ENCODE measurements at regions of chrX and their contacts with region 1.

Region 1: DNA sequence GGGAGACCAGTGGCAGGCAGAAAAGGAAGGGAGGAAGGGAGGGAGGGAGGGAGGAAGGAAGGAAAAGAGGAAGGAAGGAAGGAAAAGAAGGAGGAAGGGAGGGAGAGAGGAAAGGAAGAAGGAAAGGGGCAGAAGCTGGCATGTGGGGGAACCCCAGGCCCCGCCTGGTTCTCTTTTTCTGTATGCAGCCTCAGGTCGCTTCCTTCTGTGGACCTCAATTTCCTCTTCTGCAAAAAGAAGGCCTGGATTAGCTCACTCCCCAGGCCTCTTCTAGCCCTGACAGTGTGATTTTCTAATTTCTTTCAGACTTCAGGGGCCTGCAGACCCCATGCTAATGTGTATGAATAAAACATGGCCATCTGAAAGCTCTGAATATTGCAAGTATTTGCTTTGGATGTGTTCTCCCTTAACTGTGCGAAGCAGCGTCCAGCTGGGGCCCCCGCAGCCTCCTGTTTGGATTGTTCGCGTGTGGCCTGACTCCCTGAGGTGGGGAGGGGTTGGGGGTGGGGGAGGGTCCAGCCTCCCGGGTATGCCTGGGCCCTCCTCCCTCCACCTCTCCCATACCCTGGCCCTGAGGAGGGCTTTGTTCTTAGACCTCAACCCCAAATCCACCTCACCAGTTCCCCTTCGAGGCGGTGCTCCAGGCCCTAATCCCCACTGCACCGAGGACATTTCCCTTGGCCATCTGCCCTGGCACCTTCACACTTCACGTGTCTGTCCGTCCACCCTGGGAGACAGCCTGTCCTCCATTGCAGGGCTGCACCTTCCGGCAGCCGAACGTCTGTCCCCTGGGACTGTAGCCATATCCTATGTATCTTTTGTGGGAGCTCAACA is 199.9 kb upstream of the ATP6AP2 start:
- DNase-seq: peak; percentile 61 to 85 (median 74)
- H3K4me3 ChIP-seq: no peak overlapping the region
- H3K4me3 Mint-ChIP-seq: no peak overlapping the region
- H3K27ac ChIP-seq: peak overlapping the region; percentile 70 to 75
- H3K27ac Mint-ChIP-seq: peak overlapping the region; percentile 74 to 89 (median 86)
- H3K4me1 ChIP-seq: peaks cover 53 to 59% of the 10 kb centered on the region in 2 donors
- H3K4me1 Mint-ChIP-seq: peaks cover 54% of the 10 kb centered on the region
- H3K27me3 ChIP-seq: no peaks in the 10 kb centered on the region
- H3K27me3 Mint-ChIP-seq: peaks cover 0 to 30% (median 0%) of the 10 kb centered on the region in 3 donors
- CTCF ChIP-seq: no peak

Region 2: GRCh38 chrX:40300286-40300925 is 80.5 kb before region 1 on chrX:
- intact Hi-C with region 1: loop called in 1 of 2 experiments (anchors 10 kb)
- DNase-seq: no peak
- H3K4me3 ChIP-seq: no peak overlapping the region
- H3K4me3 Mint-ChIP-seq: no peak overlapping the region
- H3K27ac ChIP-seq: no peak overlapping the region
- H3K27ac Mint-ChIP-seq: peak overlapping the region in 1 of 7 donors; percentile 23
- H3K4me1 ChIP-seq: peaks cover 0 to 7% of the 10 kb centered on the region in 2 donors
- H3K4me1 Mint-ChIP-seq: peaks cover 8% of the 10 kb centered on the region
- H3K27me3 ChIP-seq: no peaks in the 10 kb centered on the region
- H3K27me3 Mint-ChIP-seq: peaks cover 3 to 11% (median 6%) of the 10 kb centered on the region in 3 donors
- CTCF ChIP-seq: no peak

Region 3: DNA sequence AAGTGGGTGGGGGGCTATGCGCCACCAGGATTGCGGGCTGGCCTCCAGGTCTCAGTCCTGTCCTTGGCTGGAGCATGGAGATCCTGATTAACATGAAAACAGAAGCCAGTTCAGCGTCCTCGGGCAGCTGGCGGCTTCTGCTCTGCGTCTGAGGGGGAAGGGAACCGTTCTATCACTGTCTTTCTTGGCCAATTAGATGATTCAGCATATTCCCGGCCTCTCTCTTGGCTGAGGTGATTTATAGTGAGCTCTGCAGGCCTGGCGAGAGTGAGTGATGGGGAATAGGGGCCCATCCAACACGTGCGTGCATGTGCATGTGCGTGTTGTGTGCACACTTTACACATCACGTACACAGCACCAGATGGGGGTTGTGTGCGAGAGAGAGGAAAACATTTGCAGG is 54.1 kb after region 1 on chrX:
- intact Hi-C with region 1: loop called in 1 of 2 experiments (anchors 10 kb)
- DNase-seq: peak; percentile 30 to 49 (median 47)
- H3K4me3 ChIP-seq: peak overlapping the region in 2 of 3 experiments; percentile 17 to 64
- H3K4me3 Mint-ChIP-seq: peak overlapping the region; percentile 58 to 87
- H3K27ac ChIP-seq: no peak overlapping the region
- H3K27ac Mint-ChIP-seq: peak overlapping the region; percentile 15 to 78 (median 42)
- H3K4me1 ChIP-seq: peaks cover 11 to 23% of the 10 kb centered on the region in 2 donors
- H3K4me1 Mint-ChIP-seq: peaks cover 23% of the 10 kb centered on the region
- H3K27me3 ChIP-seq: peaks cover 0 to 3% of the 10 kb centered on the region in 2 donors
- H3K27me3 Mint-ChIP-seq: peaks cover 0 to 3% (median 0%) of the 10 kb centered on the region in 3 donors
- CTCF ChIP-seq: no peak

Region 4: DNA sequence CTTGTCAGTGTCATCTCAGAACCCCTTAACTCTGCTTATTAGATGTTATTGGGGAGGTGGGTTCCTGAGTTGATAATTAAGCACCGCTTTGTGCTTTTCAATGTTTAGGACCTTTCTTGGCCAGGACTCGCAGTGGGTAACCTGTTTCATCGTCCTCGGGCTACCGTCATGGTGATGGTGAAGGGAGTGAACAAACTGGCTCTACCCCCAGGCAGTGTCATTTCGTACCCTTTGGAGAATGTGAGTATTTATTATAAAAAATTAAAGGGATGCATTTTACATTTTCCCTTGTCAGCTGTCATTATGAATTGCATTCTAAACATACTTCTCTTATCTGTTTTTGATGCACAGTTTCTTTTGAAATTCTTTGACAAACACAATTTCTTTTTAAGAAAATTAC is 210.3 kb after region 1 on chrX:
- intact Hi-C with region 1: no loop called
- DNase-seq: no peak
- H3K4me3 ChIP-seq: no peak overlapping the region
- H3K4me3 Mint-ChIP-seq: no peak overlapping the region
- H3K27ac ChIP-seq: no peak overlapping the region
- H3K27ac Mint-ChIP-seq: peak overlapping the region in 1 of 7 donors; percentile 66
- H3K4me1 ChIP-seq: no peaks in the 10 kb centered on the region
- H3K4me1 Mint-ChIP-seq: peaks cover 6% of the 10 kb centered on the region
- H3K27me3 ChIP-seq: peaks cover 0 to 35% of the 10 kb centered on the region in 2 donors
- H3K27me3 Mint-ChIP-seq: peaks cover 0 to 48% (median 0%) of the 10 kb centered on the region in 3 donors
- CTCF ChIP-seq: no peak